CD4-positive, alpha-beta memory T cell (primary cell): ENCODE measurements at regions of chr14 and their contacts with region 1.

Region 1: DNA sequence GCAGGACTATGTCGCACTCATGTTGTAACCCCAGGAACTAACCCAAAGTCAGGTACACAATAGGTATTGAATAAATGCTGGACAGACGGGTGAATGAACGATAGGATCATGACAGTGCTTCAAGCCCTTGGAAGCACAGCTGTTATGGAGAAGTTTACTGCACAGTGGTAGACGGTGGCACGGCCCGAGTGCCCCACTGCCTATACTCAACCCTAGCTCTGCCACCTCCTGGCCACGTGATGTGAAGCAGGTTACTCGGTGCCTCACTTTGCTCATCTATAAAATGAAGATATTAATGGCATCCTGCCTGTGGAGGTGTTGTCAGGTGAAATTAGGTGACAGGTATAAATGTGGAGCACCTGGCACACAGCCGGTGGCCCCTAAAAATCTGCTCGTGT is 5.8 kb downstream of the ASB2 start:
- DNase-seq: peak; percentile 69 to 78 (median 70)
- H3K4me3 ChIP-seq: peak overlapping the region; percentile 66 to 79
- H3K4me3 Mint-ChIP-seq: peak overlapping the region; percentile 86 to 94 (median 90)
- H3K27ac ChIP-seq: peak overlapping the region; percentile 41
- H3K27ac Mint-ChIP-seq: peak overlapping the region in 6 of 7 donors; percentile 74 to 93 (median 84)
- H3K4me1 ChIP-seq: peaks cover 56% of the 10 kb centered on the region
- H3K4me1 Mint-ChIP-seq: peaks cover 25 to 67% (median 45%) of the 10 kb centered on the region in 4 donors
- H3K27me3 ChIP-seq: no peaks in the 10 kb centered on the region
- H3K27me3 Mint-ChIP-seq: no peaks in the 10 kb centered on the region

Region 2: GRCh38 chr14:93712838-93713724 is 257.5 kb before region 1 on chr14:
- CTCF ChIA-PET with region 1: no interaction called
- POLR2A ChIA-PET with region 1: no interaction called
- intact Hi-C with region 1: no loop called
- DNase-seq: no peak
- H3K4me3 ChIP-seq: no peak overlapping the region
- H3K4me3 Mint-ChIP-seq: no peak overlapping the region
- H3K27ac ChIP-seq: no peak overlapping the region
- H3K27ac Mint-ChIP-seq: no peak overlapping the region
- H3K4me1 ChIP-seq: no peaks in the 10 kb centered on the region
- H3K4me1 Mint-ChIP-seq: no peaks in the 10 kb centered on the region
- H3K27me3 ChIP-seq: no peaks in the 10 kb centered on the region
- H3K27me3 Mint-ChIP-seq: peaks cover 4 to 16% of the 10 kb centered on the region in 2 donors

Region 3: GRCh38 chr14:93959239-93960107 is 11.1 kb before region 1 on chr14:
- CTCF ChIA-PET with region 1: interaction called, 1,377 read pairs
- POLR2A ChIA-PET with region 1: interaction called, 469 read pairs
- intact Hi-C with region 1: loop called (anchors 1 kb)
- DNase-seq: peak; percentile 89 to 99 (median 91)
- H3K4me3 ChIP-seq: peak overlapping the region; percentile 18 to 21
- H3K4me3 Mint-ChIP-seq: peak overlapping the region; percentile 75 to 89 (median 82)
- H3K27ac ChIP-seq: peak overlapping the region; percentile 77
- H3K27ac Mint-ChIP-seq: peak overlapping the region; percentile 96 to 100 (median 99)
- H3K4me1 ChIP-seq: peaks cover 100% of the 10 kb centered on the region
- H3K4me1 Mint-ChIP-seq: peaks cover 80 to 100% (median 93%) of the 10 kb centered on the region in 4 donors
- H3K27me3 ChIP-seq: no peaks in the 10 kb centered on the region
- H3K27me3 Mint-ChIP-seq: no peaks in the 10 kb centered on the region

Region 4: GRCh38 chr14:93984987-93985410 is 14.5 kb after region 1 on chr14:
- CTCF ChIA-PET with region 1: interaction called, 1,377 read pairs
- POLR2A ChIA-PET with region 1: interaction called, 469 read pairs
- intact Hi-C with region 1: no loop called
- DNase-seq: no peak
- H3K4me3 ChIP-seq: no peak overlapping the region
- H3K4me3 Mint-ChIP-seq: no peak overlapping the region
- H3K27ac ChIP-seq: no peak overlapping the region
- H3K27ac Mint-ChIP-seq: no peak overlapping the region
- H3K4me1 ChIP-seq: peaks cover 11% of the 10 kb centered on the region
- H3K4me1 Mint-ChIP-seq: peaks cover 3 to 14% (median 4%) of the 10 kb centered on the region in 4 donors
- H3K27me3 ChIP-seq: no peaks in the 10 kb centered on the region
- H3K27me3 Mint-ChIP-seq: no peaks in the 10 kb centered on the region

Region 5: GRCh38 chr14:93991212-93991611 is 20.7 kb after region 1 on chr14:
- CTCF ChIA-PET with region 1: interaction called, 1,377 read pairs
- POLR2A ChIA-PET with region 1: interaction called, 5 read pairs
- intact Hi-C with region 1: no loop called
- DNase-seq: no peak
- H3K4me3 ChIP-seq: no peak overlapping the region
- H3K4me3 Mint-ChIP-seq: no peak overlapping the region
- H3K27ac ChIP-seq: no peak overlapping the region
- H3K27ac Mint-ChIP-seq: no peak overlapping the region
- H3K4me1 ChIP-seq: no peaks in the 10 kb centered on the region
- H3K4me1 Mint-ChIP-seq: peaks cover 0 to 2% (median 0%) of the 10 kb centered on the region in 4 donors
- H3K27me3 ChIP-seq: no peaks in the 10 kb centered on the region
- H3K27me3 Mint-ChIP-seq: no peaks in the 10 kb centered on the region

Region 6: GRCh38 chr14:94026173-94026888 is 55.8 kb after region 1 on chr14 and contains the start of gene OTUB2:
- CTCF ChIA-PET with region 1: interaction called, 3 read pairs
- POLR2A ChIA-PET with region 1: interaction called, 5 read pairs
- intact Hi-C with region 1: loop called (anchors 2 kb)
- DNase-seq: peak; percentile 96 to 97 (median 97)
- H3K4me3 ChIP-seq: peak within 1 kb of the TSS in 1 of 2 donors; percentile 56
- H3K4me3 Mint-ChIP-seq: peak within 1 kb of the TSS; percentile 81 to 88 (median 84)
- H3K27ac ChIP-seq: peak within 1 kb of the TSS; percentile 13
- H3K27ac Mint-ChIP-seq: peak within 1 kb of the TSS in 6 of 7 donors; percentile 42 to 89 (median 74)
- H3K4me1 ChIP-seq: peaks cover 45% of the 10 kb centered on the region
- H3K4me1 Mint-ChIP-seq: peaks cover 30 to 55% (median 42%) of the 10 kb centered on the region in 4 donors
- H3K27me3 ChIP-seq: no peaks in the 10 kb centered on the region
- H3K27me3 Mint-ChIP-seq: no peaks in the 10 kb centered on the region
- total RNA-seq, gene OTUB2: 0.42 to 0.67 TPM